Calu3 (cell line): ENCODE measurements at regions of chr12 and their contacts with region 1.

Region 1: GRCh38 chr12:43349863-43350262 is 202.1 kb downstream of the ADAMTS20 start:
- DNase-seq: no peak
- H3K4me3 Mint-ChIP-seq: no peak overlapping the region
- H3K27ac Mint-ChIP-seq: no peak overlapping the region
- H3K4me1 Mint-ChIP-seq: no peaks in the 10 kb centered on the region
- H3K27me3 Mint-ChIP-seq: no peaks in the 10 kb centered on the region
- CTCF ChIP-seq: no peak

Region 2: GRCh38 chr12:43325786-43326185 is 24.1 kb before region 1 on chr12:
- CTCF ChIA-PET with region 1: no interaction called
- intact Hi-C with region 1: no loop called
- DNase-seq: no peak
- H3K4me3 Mint-ChIP-seq: no peak overlapping the region
- H3K27ac Mint-ChIP-seq: no peak overlapping the region
- H3K4me1 Mint-ChIP-seq: no peaks in the 10 kb centered on the region
- H3K27me3 Mint-ChIP-seq: no peaks in the 10 kb centered on the region
- CTCF ChIP-seq: no peak

Region 3: DNA sequence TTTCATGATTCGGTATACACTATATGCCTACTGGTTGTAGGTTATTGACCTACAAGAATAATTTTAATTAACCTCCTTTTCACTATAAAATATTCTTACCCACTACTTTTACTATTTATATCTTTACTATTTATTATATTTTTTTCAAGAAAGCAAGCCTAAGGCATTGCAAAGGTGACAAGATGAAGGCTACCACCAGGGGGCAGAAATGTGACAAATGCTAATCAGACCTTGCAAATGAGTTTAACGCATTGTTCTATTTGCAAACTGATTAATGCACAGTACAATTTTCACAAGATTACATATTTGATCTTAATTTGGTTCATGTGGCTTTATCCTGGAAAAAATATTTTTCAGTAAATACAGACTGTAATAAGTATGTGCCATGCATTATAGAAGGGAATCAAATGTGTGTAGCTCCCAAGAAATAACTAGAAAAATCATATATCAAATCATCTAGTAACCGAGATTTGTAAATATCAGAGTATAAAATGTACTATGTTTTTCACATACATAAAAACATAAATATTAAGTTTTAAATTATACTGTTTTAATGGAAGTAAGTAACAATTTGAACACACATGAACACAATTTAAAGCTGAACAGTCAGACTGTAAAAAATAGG is 95.2 kb after region 1 on chr12:
- CTCF ChIA-PET with region 1: no interaction called
- intact Hi-C with region 1: loop called (anchors 10 kb)
- DNase-seq: peak; percentile 68
- H3K4me3 Mint-ChIP-seq: no peak overlapping the region
- H3K27ac Mint-ChIP-seq: no peak overlapping the region
- H3K4me1 Mint-ChIP-seq: no peaks in the 10 kb centered on the region
- H3K27me3 Mint-ChIP-seq: no peaks in the 10 kb centered on the region
- CTCF ChIP-seq: peak; percentile 48